ENCODE measurements at regions of chr9 and their contacts with region 1.

Region 1: DNA sequence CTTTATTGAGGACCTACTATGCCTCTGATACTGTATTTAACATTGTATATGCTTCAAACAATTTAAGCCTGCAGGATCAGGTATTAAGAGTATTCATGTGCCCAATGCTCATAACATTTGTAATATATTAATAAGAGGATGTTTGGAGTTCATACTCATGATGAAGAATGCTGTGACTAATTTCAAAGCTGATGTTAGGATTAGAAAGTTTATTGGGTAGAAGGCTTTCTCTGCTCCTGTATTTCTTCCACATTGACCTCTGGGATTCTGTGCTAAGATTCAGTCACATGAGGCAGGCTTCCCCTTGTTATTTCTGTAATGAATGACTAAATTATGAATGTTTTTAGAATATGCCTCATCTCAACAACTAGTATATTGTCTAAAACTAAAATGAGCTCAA is 456.4 kb downstream of the NFIB start:
- DNase-seq: no peak
- H3K4me3 ChIP-seq: no peak overlapping the region
- H3K27ac ChIP-seq: no peak overlapping the region
- H3K4me1 ChIP-seq: peaks cover 0 to under 1% (median 0%) of the 10 kb centered on the region in 4 donors
- H3K27me3 ChIP-seq: no peaks in the 10 kb centered on the region
- CTCF ChIP-seq: no peak
- EP300 ChIP-seq: no peak
- POLR2A ChIP-seq: no peak

Region 2: GRCh38 chr9:13974891-13975290 is 117.4 kb after region 1 on chr9:
- in situ Hi-C with region 1: no loop called
- intact Hi-C with region 1: loop called (anchors 1 kb)
- DNase-seq: no peak
- H3K4me3 ChIP-seq: no peak overlapping the region
- H3K27ac ChIP-seq: no peak overlapping the region
- H3K4me1 ChIP-seq: peaks cover 0 to 6% (median 0%) of the 10 kb centered on the region in 4 donors
- H3K27me3 ChIP-seq: no peaks in the 10 kb centered on the region
- CTCF ChIP-seq: no peak
- EP300 ChIP-seq: no peak
- POLR2A ChIP-seq: no peak

Measured in transverse colon (tissue), 4 donors.